ENCODE measurements at regions of chr1 and their contacts with region 1.

Region 1: DNA sequence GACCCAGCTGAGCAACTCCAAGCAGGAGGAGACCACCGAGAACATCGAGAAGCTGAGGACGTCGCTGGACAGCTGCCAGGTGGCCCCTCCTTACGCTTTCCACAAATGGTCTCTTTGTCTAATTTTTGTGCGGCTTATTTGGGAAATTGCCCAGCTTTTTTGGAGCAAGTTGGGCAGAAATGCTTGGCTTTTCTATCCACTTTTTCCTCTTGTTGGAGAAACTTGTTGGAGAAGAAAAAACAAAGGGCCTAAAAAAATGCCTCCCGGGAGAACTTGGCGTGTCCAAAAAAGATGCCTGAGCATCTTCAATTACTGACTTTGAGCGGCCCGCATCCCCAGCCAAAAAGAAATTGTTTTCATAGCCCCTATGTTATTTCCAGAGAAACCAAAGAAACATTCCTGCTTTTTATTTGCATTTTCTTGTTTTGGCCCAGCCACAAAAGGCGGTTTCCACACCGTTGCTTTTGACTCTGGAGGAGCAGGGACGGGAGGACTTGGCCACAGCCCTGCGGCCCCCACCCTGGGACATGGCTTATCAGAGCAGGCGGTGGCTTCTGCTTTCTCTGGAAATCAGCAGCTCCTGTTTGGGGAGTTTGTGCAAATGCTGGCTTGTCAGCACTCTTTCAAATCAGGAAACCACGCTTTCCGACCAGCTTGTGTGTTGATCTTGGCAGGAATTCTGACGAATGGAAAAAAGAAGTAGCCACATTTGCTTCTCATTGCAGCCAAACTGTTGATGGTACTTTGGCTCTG is 81.2 kb upstream of the EFHD2 start:
- DNase-seq: peak; percentile 85
- ATAC-seq: peak; percentile 83

Region 2: DNA sequence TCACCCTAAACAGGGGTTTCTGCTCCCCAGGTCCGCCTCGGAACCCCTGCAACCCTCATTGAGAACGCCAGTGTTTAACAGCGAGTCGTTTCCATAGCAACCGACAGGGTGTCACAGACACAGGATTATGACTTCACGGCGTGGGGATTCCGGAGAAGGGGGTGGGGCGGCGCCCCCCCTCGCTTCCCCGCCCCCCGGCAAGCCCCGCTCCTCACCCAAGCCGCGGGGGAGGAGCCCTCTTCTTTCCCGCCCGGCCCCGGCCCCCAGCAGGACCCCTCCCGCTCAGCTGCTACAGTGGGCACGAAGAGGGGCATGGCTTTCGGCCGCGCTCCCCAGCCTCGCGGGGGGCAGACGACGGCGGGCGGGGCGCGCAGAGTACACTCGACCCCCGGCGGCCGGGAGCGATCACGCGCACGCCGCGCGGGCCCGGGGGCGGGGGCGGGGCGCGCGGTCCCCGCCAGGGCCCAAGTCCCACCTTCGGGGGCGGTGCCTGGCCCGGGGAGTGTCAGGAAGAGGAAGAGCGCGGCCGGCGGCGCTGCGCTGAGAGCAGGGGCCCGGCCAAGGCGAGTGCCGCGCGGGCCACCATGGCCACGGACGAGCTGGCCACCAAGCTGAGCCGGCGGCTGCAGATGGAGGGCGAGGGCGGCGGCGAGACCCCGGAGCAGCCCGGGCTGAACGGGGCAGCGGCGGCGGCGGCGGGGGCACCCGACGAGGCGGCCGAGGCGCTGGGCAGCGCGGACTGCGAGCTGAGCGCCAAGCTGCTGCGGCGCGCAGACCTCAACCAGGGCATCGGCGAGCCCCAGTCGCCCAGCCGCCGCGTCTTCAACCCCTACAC is 81.1 kb after region 1 on chr1 and contains the start of gene EFHD2:
- intact Hi-C with region 1: loop called (anchors 5 kb)
- DNase-seq: peak; percentile 92
- ATAC-seq: peak; percentile 87
- total RNA-seq, gene EFHD2: 11.6 TPM

Region 3: GRCh38 chr1:15430787-15431570 is 102.5 kb after region 1 on chr1:
- intact Hi-C with region 1: loop called (anchors 2 kb)
- DNase-seq: peak; percentile 83
- ATAC-seq: peak; percentile 78